Mammary epithelial cell (primary cell): ENCODE measurements at regions of chr1 and their contacts with region 1.

Region 1: GRCh38 chr1:153352523-153352922 is 3.9 kb upstream of the PGLYRP4 start:
- DNase-seq: peak; percentile 45
- H3K4me3 ChIP-seq: no peak overlapping the region
- H3K27ac ChIP-seq: no peak overlapping the region
- H3K4me1 ChIP-seq: peaks cover 12% of the 10 kb centered on the region
- H3K27me3 ChIP-seq: no peaks in the 10 kb centered on the region
- CTCF ChIP-seq: peak; percentile 85 to 95

Region 2: DNA sequence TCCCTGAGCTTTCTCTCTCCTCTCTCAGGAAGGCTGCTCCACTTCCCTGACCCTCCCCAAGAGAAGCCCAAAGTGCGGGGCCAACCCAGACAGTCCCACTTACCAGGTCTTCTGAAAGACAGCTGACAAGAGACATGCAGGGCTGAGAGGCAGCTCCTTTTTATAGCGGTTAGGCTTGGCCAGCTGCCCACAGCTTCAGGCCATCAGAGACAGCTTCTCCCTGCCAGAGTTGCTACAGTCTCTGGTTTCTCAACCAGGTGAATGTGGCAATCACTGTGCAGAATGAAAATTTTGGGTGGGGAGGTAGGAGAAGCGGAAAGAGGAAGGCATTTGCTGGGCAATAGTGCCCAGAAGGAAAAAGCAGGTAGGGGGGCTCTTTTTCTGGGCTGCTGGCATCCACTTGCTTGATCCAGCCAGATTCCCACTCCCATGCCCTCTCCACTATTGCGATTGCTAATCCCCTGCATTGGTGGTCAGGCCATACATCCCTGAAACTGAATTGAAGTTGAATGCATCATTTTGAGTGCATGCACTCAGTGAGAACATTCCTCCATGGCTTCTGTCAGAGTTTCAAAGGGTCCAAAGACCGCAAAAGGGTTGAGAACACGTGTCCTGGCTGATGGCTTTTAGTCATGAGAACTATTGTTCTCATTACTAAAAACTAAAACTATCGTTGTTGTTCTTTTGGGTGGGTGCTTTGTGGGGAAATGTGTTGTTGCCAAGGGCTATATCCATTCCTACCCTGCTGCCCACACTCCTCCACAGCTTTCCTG is 38.6 kb after region 1 on chr1 and contains the start of gene S100A8:
- CTCF ChIA-PET with region 1: no interaction called
- dilution Hi-C with region 1: no loop called
- in situ Hi-C with region 1: no loop called
- intact Hi-C with region 1: loop called (anchors 1 kb)
- DNase-seq: peak; percentile 89
- H3K4me3 ChIP-seq: no peak within 1 kb of the TSS
- H3K27ac ChIP-seq: no peak within 1 kb of the TSS
- H3K4me1 ChIP-seq: peaks cover 50% of the 10 kb centered on the region
- H3K27me3 ChIP-seq: no peaks in the 10 kb centered on the region
- CTCF ChIP-seq: no peak
- total RNA-seq, gene S100A8: 4.0 to 363 TPM

Region 3: GRCh38 chr1:153494976-153495535 is 142.5 kb after region 1 on chr1:
- CTCF ChIA-PET with region 1: interaction called, 23 read pairs
- dilution Hi-C with region 1: loop called (anchors 5 kb)
- in situ Hi-C with region 1: loop called (anchors 5 kb)
- intact Hi-C with region 1: loop called (anchors 1 kb)
- DNase-seq: no peak
- H3K4me3 ChIP-seq: no peak overlapping the region
- H3K27ac ChIP-seq: no peak overlapping the region
- H3K4me1 ChIP-seq: peaks cover 36% of the 10 kb centered on the region
- H3K27me3 ChIP-seq: no peaks in the 10 kb centered on the region
- CTCF ChIP-seq: peak; percentile 65 to 90

Region 4: GRCh38 chr1:153526132-153526543 is 173.6 kb after region 1 on chr1:
- CTCF ChIA-PET with region 1: no interaction called
- dilution Hi-C with region 1: no loop called
- in situ Hi-C with region 1: no loop called
- intact Hi-C with region 1: no loop called
- DNase-seq: peak; percentile 89
- H3K4me3 ChIP-seq: no peak overlapping the region
- H3K27ac ChIP-seq: peak overlapping the region; percentile 91
- H3K4me1 ChIP-seq: peaks cover 36% of the 10 kb centered on the region
- H3K27me3 ChIP-seq: no peaks in the 10 kb centered on the region
- CTCF ChIP-seq: no peak

Region 5: DNA sequence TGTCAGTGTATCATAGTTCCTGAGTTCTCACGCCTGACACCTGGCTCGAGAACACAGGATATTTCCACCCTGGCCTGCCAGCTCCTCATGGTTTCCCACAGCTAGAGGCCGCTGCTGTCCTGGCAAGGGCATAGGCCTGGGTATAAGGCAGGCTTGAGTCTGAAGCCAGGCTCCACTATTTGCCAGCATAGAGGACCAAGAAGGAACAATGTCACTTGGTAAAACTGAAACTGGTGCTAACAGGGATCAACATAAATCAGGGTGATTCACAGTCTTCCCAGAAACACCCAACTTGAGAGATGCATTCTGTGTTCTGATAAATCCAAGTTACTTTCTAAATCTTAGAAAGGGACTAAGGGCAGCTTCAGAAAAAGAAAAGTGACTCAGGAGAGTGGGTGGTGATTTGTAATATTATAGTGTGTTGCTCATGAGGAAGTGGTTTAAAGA is 220.1 kb after region 1 on chr1:
- CTCF ChIA-PET with region 1: no interaction called
- dilution Hi-C with region 1: no loop called
- in situ Hi-C with region 1: no loop called
- intact Hi-C with region 1: loop called (anchors 1 kb)
- DNase-seq: peak; percentile 89
- H3K4me3 ChIP-seq: no peak overlapping the region
- H3K27ac ChIP-seq: peak overlapping the region; percentile 78
- H3K4me1 ChIP-seq: peaks cover 39% of the 10 kb centered on the region
- H3K27me3 ChIP-seq: no peaks in the 10 kb centered on the region
- CTCF ChIP-seq: peak; percentile 92 to 99

Region 6: DNA sequence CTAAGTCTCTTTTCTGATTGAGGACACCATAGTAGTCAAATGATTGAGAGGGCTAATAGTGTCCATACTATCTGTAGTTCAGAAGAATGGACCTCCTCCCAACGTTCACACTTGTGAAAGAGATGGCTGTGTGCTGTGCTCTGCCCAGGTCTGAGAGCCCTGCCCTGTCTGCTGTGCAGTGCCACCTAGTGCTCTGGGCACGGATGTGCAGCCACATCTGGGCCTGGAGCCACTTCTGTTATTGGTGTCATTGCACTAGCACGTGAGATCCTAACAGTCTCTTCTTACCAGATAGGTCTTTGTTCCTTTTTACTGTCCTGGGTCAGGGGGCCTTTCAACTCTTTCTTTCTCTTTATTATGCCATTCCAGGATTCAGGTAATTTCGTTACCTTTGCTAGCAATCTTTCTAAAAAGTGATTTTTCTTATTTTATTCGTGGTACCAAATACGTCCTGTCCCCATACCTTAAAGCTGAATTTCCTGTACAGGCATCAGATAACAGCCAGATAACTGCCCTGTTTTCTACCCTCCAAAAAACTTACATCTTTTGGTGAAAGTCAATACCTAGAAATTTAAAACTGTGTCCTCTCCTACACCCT is 397.0 kb after region 1 on chr1:
- CTCF ChIA-PET with region 1: no interaction called
- dilution Hi-C with region 1: loop called (anchors 10 kb)
- in situ Hi-C with region 1: no loop called
- intact Hi-C with region 1: loop called (anchors 2 kb)
- DNase-seq: peak; percentile 62
- H3K4me3 ChIP-seq: no peak overlapping the region
- H3K27ac ChIP-seq: no peak overlapping the region
- H3K4me1 ChIP-seq: no peaks in the 10 kb centered on the region
- H3K27me3 ChIP-seq: no peaks in the 10 kb centered on the region
- CTCF ChIP-seq: peak; percentile 98 to 99